ENCODE measurements at regions of chr17 and their contacts with region 1.

Region 1: GRCh38 chr17:59964482-59965328 is at the start of gene RNFT1:
- DNase-seq: peak; percentile 75 to 88
- ATAC-seq: peak; percentile 90 to 93
- H3K4me3 ChIP-seq: peak within 1 kb of the TSS; percentile 78 to 95 (median 87)
- H3K27ac ChIP-seq: peak within 1 kb of the TSS; percentile 96 to 99 (median 96)
- H3K4me1 ChIP-seq: peaks cover 20 to 24% of the 10 kb centered on the region in 2 donors
- H3K27me3 ChIP-seq: no peaks in the 10 kb centered on the region
- CTCF ChIP-seq: no peak
- POLR2A ChIP-seq: peak; percentile 78 to 90
- total RNA-seq, gene RNFT1: 10.2 to 17.9 (median 13.8) TPM

Region 2: GRCh38 chr17:59846394-59847165 is 118.1 kb before region 1 on chr17:
- in situ Hi-C with region 1: no loop called
- intact Hi-C with region 1: loop called (anchors 5 kb)
- DNase-seq: peak; percentile 76 to 82
- ATAC-seq: peak; percentile 56 to 63
- H3K4me3 ChIP-seq: peak overlapping the region in 3 of 4 donors; percentile 5 to 33 (median 24)
- H3K27ac ChIP-seq: peak overlapping the region; percentile 88 to 99 (median 91)
- H3K4me1 ChIP-seq: peaks cover 30 to 41% of the 10 kb centered on the region in 2 donors
- H3K27me3 ChIP-seq: no peaks in the 10 kb centered on the region
- CTCF ChIP-seq: no peak
- POLR2A ChIP-seq: no peak

Region 3: GRCh38 chr17:59892924-59893676 is 71.6 kb before region 1 on chr17 and contains the starts of genes RPS6KB1 and TUBD1:
- in situ Hi-C with region 1: no loop called
- intact Hi-C with region 1: loop called (anchors 1 kb)
- DNase-seq: peak; percentile 97 to 98
- ATAC-seq: peak; percentile 97 to 98
- H3K4me3 ChIP-seq: peak within 1 kb of the TSS; percentile 94 to 99 (median 96)
- H3K27ac ChIP-seq: peak within 1 kb of the TSS; percentile 95 to 98 (median 98)
- H3K4me1 ChIP-seq: peaks cover 32 to 38% of the 10 kb centered on the region in 2 donors
- H3K27me3 ChIP-seq: no peaks in the 10 kb centered on the region
- CTCF ChIP-seq: peak in 1 of 5 experiments; percentile 13
- POLR2A ChIP-seq: peak; percentile 92 to 93
- total RNA-seq, gene RPS6KB1: 38.4 to 58.4 (median 41.6) TPM
- total RNA-seq, gene TUBD1: 5.4 to 9.2 (median 9.2) TPM

Measured in gastrocnemius medialis (tissue), 4 donors.